Esophagus muscularis mucosa (tissue), 4 donors: ENCODE measurements at regions of chr3 and their contacts with region 1.

Region 1: GRCh38 chr3:190424478-190425439 is 24.9 kb downstream of the TMEM207 start:
- DNase-seq: no peak
- H3K4me3 ChIP-seq: no peak overlapping the region
- H3K27ac ChIP-seq: no peak overlapping the region
- H3K4me1 ChIP-seq: no peaks in the 10 kb centered on the region
- H3K27me3 ChIP-seq: no peaks in the 10 kb centered on the region
- CTCF ChIP-seq: peak; percentile 50 to 67 (median 66)
- EP300 ChIP-seq: no peak
- POLR2A ChIP-seq: no peak

Region 2: GRCh38 chr3:189961525-189962161 is 463.1 kb before region 1 on chr3:
- intact Hi-C with region 1: loop called (anchors 10 kb)
- DNase-seq: no peak
- H3K4me3 ChIP-seq: no peak overlapping the region
- H3K27ac ChIP-seq: peak overlapping the region in 3 of 4 donors; percentile 10 to 52 (median 28)
- H3K4me1 ChIP-seq: peaks cover 5 to 12% (median 10%) of the 10 kb centered on the region in 4 donors
- H3K27me3 ChIP-seq: no peaks in the 10 kb centered on the region
- CTCF ChIP-seq: peak; percentile 88 to 93 (median 91)
- EP300 ChIP-seq: no peak
- POLR2A ChIP-seq: no peak

Region 3: DNA sequence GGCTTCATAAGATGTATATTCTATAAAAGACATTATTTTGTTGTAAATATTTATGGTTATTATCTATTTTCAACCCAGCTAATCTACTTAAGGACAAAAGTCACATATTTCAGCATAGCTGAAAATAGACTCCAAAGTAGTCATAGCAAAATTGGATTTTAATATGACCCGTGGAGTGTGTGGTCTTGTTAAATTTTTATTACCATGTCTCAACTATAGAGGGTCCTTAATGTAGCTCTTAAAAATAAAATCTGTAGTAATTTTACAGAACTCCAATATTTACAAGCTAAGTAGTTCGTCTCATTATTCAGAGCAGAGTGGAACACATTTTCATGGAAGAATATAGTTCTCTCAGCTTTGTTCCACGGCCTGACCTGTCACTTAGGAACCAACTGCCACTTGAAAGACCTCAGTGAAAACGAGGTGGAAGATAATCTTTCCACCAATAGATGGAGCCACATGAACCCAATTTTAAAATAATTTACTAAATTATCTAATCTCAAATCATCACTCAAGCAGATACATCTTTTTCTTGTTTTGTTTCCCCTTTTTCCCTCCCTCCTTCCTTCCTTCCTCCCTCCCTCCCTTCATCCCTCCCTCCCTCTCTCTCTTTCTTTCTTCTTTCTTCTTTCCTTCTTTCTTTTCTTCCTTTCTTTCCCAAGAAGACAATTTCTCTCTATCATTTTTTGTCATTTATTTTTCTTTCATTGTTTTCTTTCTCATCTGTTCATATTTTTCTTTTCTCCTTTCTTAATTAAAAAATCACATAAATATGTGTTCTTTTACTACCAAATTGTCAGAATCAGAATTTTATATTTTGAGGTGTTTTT is 199.7 kb before region 1 on chr3:
- intact Hi-C with region 1: loop called (anchors 10 kb)
- DNase-seq: no peak
- H3K4me3 ChIP-seq: no peak overlapping the region
- H3K27ac ChIP-seq: no peak overlapping the region
- H3K4me1 ChIP-seq: no peaks in the 10 kb centered on the region
- H3K27me3 ChIP-seq: no peaks in the 10 kb centered on the region
- CTCF ChIP-seq: peak in 2 of 3 experiments; percentile 45 to 47
- EP300 ChIP-seq: no peak
- POLR2A ChIP-seq: no peak